Activated CD4-positive, alpha-beta T cell treated with anti-CD3 and anti-CD28 coated beads, Interleukin-2, amount 10 ng/mL, durations not matched to agents 24 days and 14 days (primary cell): ENCODE measurements at regions of chr1 and their contacts with region 1.

Region 1: GRCh38 chr1:1430114-1430982 is 5.1 kb upstream of the VWA1 start:
- DNase-seq: no peak
- H3K4me3 Mint-ChIP-seq: no peak overlapping the region
- H3K27ac Mint-ChIP-seq: no peak overlapping the region
- H3K4me1 Mint-ChIP-seq: peaks cover 8% of the 10 kb centered on the region
- H3K27me3 Mint-ChIP-seq: peaks cover 18% of the 10 kb centered on the region

Region 2: DNA sequence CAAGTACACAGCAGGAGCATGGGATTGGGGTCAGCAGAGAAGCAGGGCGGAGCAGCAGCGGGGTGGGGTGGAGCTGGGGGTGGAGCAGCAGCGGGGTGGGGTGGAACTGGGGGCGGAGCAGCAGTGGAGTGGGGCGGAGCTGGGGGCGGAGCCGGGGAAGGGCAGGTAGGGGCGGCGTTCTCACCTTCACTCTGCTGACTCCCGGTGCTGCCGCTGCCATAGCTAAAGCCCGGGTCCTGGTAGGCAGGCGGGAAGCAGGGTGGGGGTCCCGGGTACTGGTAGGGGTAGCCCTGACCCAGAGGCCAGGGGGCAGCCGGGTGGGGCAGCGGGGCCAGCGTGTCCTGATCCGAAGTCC is 92.6 kb before region 1 on chr1:
- intact Hi-C with region 1: no loop called
- DNase-seq: peak; percentile 78
- H3K4me3 Mint-ChIP-seq: no peak overlapping the region
- H3K27ac Mint-ChIP-seq: no peak overlapping the region
- H3K4me1 Mint-ChIP-seq: no peaks in the 10 kb centered on the region
- H3K27me3 Mint-ChIP-seq: no peaks in the 10 kb centered on the region

Region 3: GRCh38 chr1:1399187-1399871 is 31.0 kb before region 1 on chr1 and contains the start of gene CCNL2:
- intact Hi-C with region 1: loop called (anchors 5 kb)
- DNase-seq: peak; percentile 100
- H3K4me3 Mint-ChIP-seq: peak within 1 kb of the TSS; percentile 92
- H3K27ac Mint-ChIP-seq: peak within 1 kb of the TSS; percentile 90
- H3K4me1 Mint-ChIP-seq: peaks cover 42% of the 10 kb centered on the region
- H3K27me3 Mint-ChIP-seq: no peaks in the 10 kb centered on the region
- total RNA-seq, gene CCNL2: 144 and 146 TPM in 2 replicates

Region 4: GRCh38 chr1:1507305-1507704 is 77.0 kb after region 1 on chr1:
- intact Hi-C with region 1: no loop called
- DNase-seq: no peak
- H3K4me3 Mint-ChIP-seq: no peak overlapping the region
- H3K27ac Mint-ChIP-seq: no peak overlapping the region
- H3K4me1 Mint-ChIP-seq: peaks cover 16% of the 10 kb centered on the region
- H3K27me3 Mint-ChIP-seq: no peaks in the 10 kb centered on the region